T-cell (primary cell): ENCODE measurements at regions of chr10 and their contacts with region 1.

Region 1: GRCh38 chr10:104254493-104255310 is at the start of gene GSTO1:
- DNase-seq: peak in 26 of 35 experiments; percentile 19 to 68 (median 28)
- ATAC-seq: peak; percentile 66 to 80 (median 76)
- H3K4me3 ChIP-seq: peak within 1 kb of the TSS; percentile 68 to 88
- H3K4me3 Mint-ChIP-seq: peak within 1 kb of the TSS; percentile 91 to 98 (median 98)
- H3K27ac ChIP-seq: peak within 1 kb of the TSS; percentile 79
- H3K27ac Mint-ChIP-seq: peak within 1 kb of the TSS; percentile 91 to 99
- H3K4me1 ChIP-seq: peaks cover 11 to 13% of the 10 kb centered on the region in 2 experiments
- H3K4me1 Mint-ChIP-seq: peaks cover 49 to 57% (median 54%) of the 10 kb centered on the region in 3 donors
- H3K27me3 ChIP-seq: no peaks in the 10 kb centered on the region
- H3K27me3 Mint-ChIP-seq: peaks cover 0 to 4% of the 10 kb centered on the region in 2 donors
- total RNA-seq, gene GSTO1: 19.9 to 61.5 (median 46.2) TPM

Region 2: GRCh38 chr10:103666087-103666761 is 588.5 kb before region 1 on chr10:
- CTCF ChIA-PET with region 1: no interaction called
- POLR2A ChIA-PET with region 1: no interaction called
- DNase-seq: no peak
- ATAC-seq: no peak
- H3K4me3 ChIP-seq: no peak overlapping the region
- H3K4me3 Mint-ChIP-seq: no peak overlapping the region
- H3K27ac ChIP-seq: no peak overlapping the region
- H3K27ac Mint-ChIP-seq: peak overlapping the region in 1 of 2 donors; percentile 9
- H3K4me1 ChIP-seq: peaks cover 0 to 24% of the 10 kb centered on the region in 2 experiments
- H3K4me1 Mint-ChIP-seq: peaks cover 25 to 31% (median 29%) of the 10 kb centered on the region in 3 donors
- H3K27me3 ChIP-seq: no peaks in the 10 kb centered on the region
- H3K27me3 Mint-ChIP-seq: no peaks in the 10 kb centered on the region

Region 3: DNA sequence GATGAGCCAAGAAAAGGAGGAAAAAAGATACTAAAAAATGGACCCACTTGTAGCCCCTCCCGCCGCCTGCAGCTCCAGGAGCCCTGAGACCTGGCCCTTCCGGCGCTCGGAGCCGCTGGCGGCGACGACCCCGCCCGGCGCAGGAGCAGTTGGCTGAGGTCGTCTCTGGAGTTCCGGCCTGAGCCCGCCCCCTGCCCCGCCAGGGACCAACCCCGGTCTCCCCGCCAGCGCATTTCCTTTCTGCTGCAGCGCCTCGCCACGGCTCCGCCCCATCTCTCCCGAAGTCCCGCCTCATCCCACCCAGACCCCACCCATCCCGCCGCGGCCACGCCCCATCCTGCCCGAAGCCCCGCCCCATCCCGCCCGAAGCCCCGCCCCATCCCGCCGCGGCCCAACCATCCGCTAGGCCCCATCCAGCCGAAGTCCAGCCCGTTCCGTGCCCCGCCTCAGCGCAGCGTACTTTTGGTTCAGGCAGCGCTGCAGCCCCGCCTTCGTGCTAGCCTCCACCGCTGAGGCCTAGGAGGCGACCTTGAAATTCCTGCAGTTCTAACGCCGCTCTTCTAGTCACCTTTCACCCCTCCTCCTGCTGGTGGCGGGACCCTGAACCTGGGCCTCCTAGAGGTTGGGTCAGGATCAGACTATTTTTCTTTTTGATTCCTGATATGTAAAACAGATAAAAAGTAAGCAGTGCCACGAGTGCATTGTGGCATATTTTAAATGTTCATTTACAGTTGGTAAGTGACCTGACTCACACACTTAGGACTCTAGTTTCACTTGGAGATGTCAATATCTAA is 336.5 kb before region 1 on chr10 and contains the start of gene STN1:
- CTCF ChIA-PET with region 1: interaction called in 1 of 2 experiments, 10 read pairs
- POLR2A ChIA-PET with region 1: no interaction called
- DNase-seq: peak; percentile 88 to 96 (median 93)
- ATAC-seq: peak; percentile 94 to 95 (median 94)
- H3K4me3 ChIP-seq: peak within 1 kb of the TSS; percentile 90 to 91
- H3K4me3 Mint-ChIP-seq: peak within 1 kb of the TSS; percentile 93 to 98 (median 94)
- H3K27ac ChIP-seq: peak within 1 kb of the TSS; percentile 85
- H3K27ac Mint-ChIP-seq: peak within 1 kb of the TSS; percentile 96 to 99
- H3K4me1 ChIP-seq: peaks cover 23 to 43% of the 10 kb centered on the region in 2 experiments
- H3K4me1 Mint-ChIP-seq: peaks cover 38 to 42% (median 39%) of the 10 kb centered on the region in 3 donors
- H3K27me3 ChIP-seq: no peaks in the 10 kb centered on the region
- H3K27me3 Mint-ChIP-seq: no peaks in the 10 kb centered on the region
- total RNA-seq, gene STN1: 37.6 to 47.5 (median 41.8) TPM

Region 4: GRCh38 chr10:104121520-104122224 is 133.0 kb before region 1 on chr10 and contains the start of gene SFR1:
- CTCF ChIA-PET with region 1: no interaction called
- POLR2A ChIA-PET with region 1: interaction called, 4 to 10 read pairs
- DNase-seq: peak; percentile 97 to 100 (median 99)
- ATAC-seq: peak; percentile 88 to 97 (median 94)
- H3K4me3 ChIP-seq: peak within 1 kb of the TSS; percentile 91 to 97
- H3K4me3 Mint-ChIP-seq: peak within 1 kb of the TSS; percentile 90 to 93 (median 92)
- H3K27ac ChIP-seq: peak within 1 kb of the TSS; percentile 100
- H3K27ac Mint-ChIP-seq: peak within 1 kb of the TSS; percentile 98 to 99
- H3K4me1 ChIP-seq: peaks cover 10 to 14% of the 10 kb centered on the region in 2 experiments
- H3K4me1 Mint-ChIP-seq: peaks cover 24 to 32% (median 26%) of the 10 kb centered on the region in 3 donors
- H3K27me3 ChIP-seq: no peaks in the 10 kb centered on the region
- H3K27me3 Mint-ChIP-seq: no peaks in the 10 kb centered on the region
- total RNA-seq, gene SFR1: 9.0 to 11.3 (median 9.7) TPM

Region 5: DNA sequence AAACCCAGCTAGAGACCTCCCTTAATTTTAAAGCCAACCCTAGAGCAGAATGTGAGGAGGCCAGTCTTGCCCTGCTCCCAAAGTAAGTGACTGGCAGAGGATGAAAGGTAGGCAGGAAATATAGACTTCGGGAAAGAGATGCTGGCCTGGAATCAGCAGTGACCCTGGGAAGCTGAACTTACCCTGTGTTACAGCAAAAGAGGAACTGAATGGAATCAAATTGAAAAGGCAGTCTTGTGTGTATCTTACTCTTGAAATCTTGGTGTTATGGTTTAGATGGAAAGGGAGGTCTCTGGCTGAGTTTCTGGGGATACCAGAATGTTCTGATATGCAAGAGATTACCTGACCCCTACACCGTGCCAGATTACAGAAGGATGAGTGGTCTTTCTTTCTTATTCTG is 14.6 kb before region 1 on chr10:
- CTCF ChIA-PET with region 1: no interaction called
- POLR2A ChIA-PET with region 1: no interaction called
- DNase-seq: no peak
- ATAC-seq: no peak
- H3K4me3 ChIP-seq: no peak overlapping the region
- H3K4me3 Mint-ChIP-seq: no peak overlapping the region
- H3K27ac ChIP-seq: no peak overlapping the region
- H3K27ac Mint-ChIP-seq: no peak overlapping the region
- H3K4me1 ChIP-seq: no peaks in the 10 kb centered on the region
- H3K4me1 Mint-ChIP-seq: no peaks in the 10 kb centered on the region
- H3K27me3 ChIP-seq: peaks cover 0 to 5% of the 10 kb centered on the region in 2 experiments
- H3K27me3 Mint-ChIP-seq: peaks cover 31 to 36% of the 10 kb centered on the region in 2 donors

Region 6: GRCh38 chr10:104274762-104275721 is 20.3 kb after region 1 on chr10:
- CTCF ChIA-PET with region 1: interaction called, 12 read pairs
- POLR2A ChIA-PET with region 1: interaction called in 1 of 2 experiments, 16 read pairs
- DNase-seq: peak in 25 of 35 experiments; percentile 14 to 67 (median 32)
- ATAC-seq: peak; percentile 77 to 90 (median 85)
- H3K4me3 ChIP-seq: peak overlapping the region in 1 of 2 donors; percentile 9
- H3K4me3 Mint-ChIP-seq: peak overlapping the region in 1 of 3 donors; percentile 37
- H3K27ac ChIP-seq: no peak overlapping the region
- H3K27ac Mint-ChIP-seq: no peak overlapping the region
- H3K4me1 ChIP-seq: peaks cover 0 to 9% of the 10 kb centered on the region in 2 experiments
- H3K4me1 Mint-ChIP-seq: peaks cover 4% of the 10 kb centered on the region in 3 donors
- H3K27me3 ChIP-seq: peaks cover 0 to 22% of the 10 kb centered on the region in 2 experiments
- H3K27me3 Mint-ChIP-seq: peaks cover 5 to 11% of the 10 kb centered on the region in 2 donors